Mammary epithelial cell (primary cell): ENCODE measurements at regions of chr17 and their contacts with region 1.

Region 1: DNA sequence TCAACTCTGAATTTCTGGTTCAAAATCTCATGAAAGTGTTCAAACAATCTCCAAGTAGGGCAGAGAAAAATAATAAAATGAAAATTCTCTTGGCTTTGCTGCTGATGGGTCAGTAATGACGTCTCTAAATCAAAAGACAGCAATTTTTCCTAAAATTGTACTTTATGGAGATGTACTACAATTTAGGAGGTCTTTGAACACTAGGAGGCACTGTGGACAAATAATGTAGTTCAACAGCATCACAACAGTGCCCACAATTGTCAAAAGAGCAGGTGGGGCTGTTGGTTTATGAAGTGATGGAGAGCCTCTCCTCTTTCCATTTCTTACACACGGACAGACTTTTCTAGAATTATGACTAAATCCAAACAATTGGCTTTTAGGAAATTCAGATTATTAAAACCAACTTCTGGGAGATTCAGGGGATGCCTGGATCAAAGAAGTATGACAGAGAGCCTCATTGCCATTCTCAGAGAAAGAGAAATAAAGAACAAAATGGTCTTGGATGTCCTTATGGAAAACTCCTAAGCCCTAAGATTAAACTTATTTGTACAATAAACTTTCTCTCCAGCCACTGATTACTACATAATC is 23.8 kb downstream of the EZH1 start:
- DNase-seq: peak; percentile 43
- H3K4me3 ChIP-seq: no peak overlapping the region
- H3K27ac ChIP-seq: no peak overlapping the region
- H3K4me1 ChIP-seq: no peaks in the 10 kb centered on the region
- H3K27me3 ChIP-seq: no peaks in the 10 kb centered on the region
- CTCF ChIP-seq: peak; percentile 59 to 65

Region 2: GRCh38 chr17:42667123-42667951 is 53.8 kb before region 1 on chr17:
- CTCF ChIA-PET with region 1: no interaction called
- dilution Hi-C with region 1: loop called (anchors 10 kb)
- in situ Hi-C with region 1: no loop called
- intact Hi-C with region 1: no loop called
- DNase-seq: peak; percentile 94
- H3K4me3 ChIP-seq: no peak overlapping the region
- H3K27ac ChIP-seq: peak overlapping the region; percentile 32
- H3K4me1 ChIP-seq: peaks cover 40% of the 10 kb centered on the region
- H3K27me3 ChIP-seq: no peaks in the 10 kb centered on the region
- CTCF ChIP-seq: no peak

Region 3: DNA sequence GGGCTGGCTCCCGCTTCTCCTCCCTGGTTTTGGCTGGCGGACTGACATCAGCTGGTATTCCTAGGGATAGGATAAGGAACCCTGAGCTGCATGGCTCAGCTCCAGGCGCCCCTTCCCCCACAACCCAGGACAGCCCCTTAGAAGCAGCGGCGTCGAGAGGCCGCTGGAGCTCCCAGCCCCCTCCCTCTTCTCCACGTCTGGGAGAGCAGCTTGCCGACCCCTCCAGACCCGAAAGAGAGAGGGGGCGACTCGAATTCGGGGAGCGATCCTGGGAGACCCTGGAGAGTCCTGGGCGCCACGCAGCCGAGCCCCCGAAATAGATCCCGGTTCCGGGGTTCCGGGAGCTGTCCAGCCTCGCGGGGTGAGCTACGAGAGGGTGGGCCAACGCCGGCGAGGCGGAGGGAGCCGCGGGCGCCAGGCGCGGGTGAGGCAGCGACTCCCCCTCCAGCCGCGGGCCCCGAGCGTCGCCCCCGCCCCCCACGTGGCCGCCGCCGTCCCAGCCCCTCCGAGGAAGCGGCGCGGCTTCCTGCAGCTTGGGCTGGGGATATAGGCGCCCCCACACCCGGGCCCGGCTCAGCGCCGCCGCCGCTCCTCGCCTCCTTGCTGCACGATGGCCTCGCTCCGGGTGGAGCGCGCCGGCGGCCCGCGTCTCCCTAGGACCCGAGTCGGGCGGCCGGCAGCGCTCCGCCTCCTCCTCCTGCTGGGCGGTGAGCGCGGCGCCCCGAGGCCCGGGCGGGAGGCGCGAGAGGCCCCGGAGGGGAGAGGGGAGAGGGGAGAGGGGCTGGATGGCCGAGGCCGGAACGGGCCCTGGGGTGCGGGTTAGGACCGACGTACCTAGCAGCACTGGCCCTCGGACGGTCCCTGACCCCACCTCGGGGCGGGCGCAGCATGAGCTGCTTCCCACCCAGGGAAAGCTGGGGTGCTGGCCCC is 39.8 kb after region 1 on chr17 and contains the start of gene RAMP2:
- CTCF ChIA-PET with region 1: no interaction called
- dilution Hi-C with region 1: no loop called
- in situ Hi-C with region 1: no loop called
- intact Hi-C with region 1: loop called (anchors 1 kb)
- DNase-seq: no peak
- H3K4me3 ChIP-seq: peak within 1 kb of the TSS; percentile 25 to 33 (median 31)
- H3K27ac ChIP-seq: no peak within 1 kb of the TSS
- H3K4me1 ChIP-seq: peaks cover 10% of the 10 kb centered on the region
- H3K27me3 ChIP-seq: peaks cover 17% of the 10 kb centered on the region
- CTCF ChIP-seq: no peak
- total RNA-seq, gene RAMP2: not detected

Region 4: DNA sequence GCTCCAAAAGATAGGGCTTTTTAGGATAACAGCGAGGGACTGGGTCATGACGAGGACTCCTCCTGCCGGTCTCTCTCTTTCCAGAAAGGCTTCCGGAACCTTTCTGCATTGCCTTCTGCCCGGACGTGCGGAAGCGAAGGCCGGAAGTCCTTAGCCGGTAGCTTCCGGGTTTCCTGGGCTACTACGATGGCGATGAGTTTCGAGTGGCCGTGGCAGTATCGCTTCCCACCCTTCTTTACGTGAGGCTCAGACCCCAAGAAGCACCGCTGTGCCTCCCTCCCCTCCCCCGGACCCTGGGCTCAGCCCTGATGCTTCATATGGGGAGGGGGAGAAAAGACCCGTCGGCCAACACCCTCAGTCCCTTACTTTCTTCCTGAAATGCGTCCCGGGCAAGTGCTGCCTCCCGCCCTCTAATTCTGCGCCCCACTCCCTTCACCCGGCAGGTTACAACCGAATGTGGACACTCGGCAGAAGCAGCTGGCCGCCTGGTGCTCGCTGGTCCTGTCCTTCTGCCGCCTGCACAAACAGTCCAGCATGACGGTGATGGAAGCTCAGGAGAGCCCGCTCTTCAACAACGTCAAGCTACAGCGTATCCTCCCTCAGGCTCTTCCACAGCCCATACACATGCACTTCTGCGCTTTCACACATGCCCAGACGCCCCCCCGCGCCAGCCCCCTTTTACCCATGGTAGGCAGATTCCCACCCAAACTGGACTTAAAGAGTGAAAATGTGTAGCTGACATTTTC is 52.4 kb after region 1 on chr17 and contains the start of gene VPS25:
- CTCF ChIA-PET with region 1: no interaction called
- dilution Hi-C with region 1: loop called (anchors 5 kb)
- in situ Hi-C with region 1: no loop called
- intact Hi-C with region 1: loop called (anchors 1 kb)
- DNase-seq: peak; percentile 81
- H3K4me3 ChIP-seq: peak within 1 kb of the TSS; percentile 65 to 84 (median 78)
- H3K27ac ChIP-seq: peak within 1 kb of the TSS; percentile 87
- H3K4me1 ChIP-seq: peaks cover 11% of the 10 kb centered on the region
- H3K27me3 ChIP-seq: no peaks in the 10 kb centered on the region
- CTCF ChIP-seq: peak in 1 of 2 donors; percentile 32
- total RNA-seq, gene VPS25: 58.0 to 83.6 TPM

Region 5: GRCh38 chr17:42779936-42780850 is 59.1 kb after region 1 on chr17 and contains the start of gene WNK4:
- CTCF ChIA-PET with region 1: no interaction called
- dilution Hi-C with region 1: loop called (anchors 5 kb)
- in situ Hi-C with region 1: no loop called
- intact Hi-C with region 1: no loop called
- DNase-seq: no peak
- H3K4me3 ChIP-seq: peak within 1 kb of the TSS in 1 of 3 experiments; percentile 24
- H3K27ac ChIP-seq: no peak within 1 kb of the TSS
- H3K4me1 ChIP-seq: peaks cover 24% of the 10 kb centered on the region
- H3K27me3 ChIP-seq: peaks cover 2% of the 10 kb centered on the region
- CTCF ChIP-seq: no peak
- total RNA-seq, gene WNK4: 0.75 TPM in 1 of 2 donors, not detected in the other

Region 6: DNA sequence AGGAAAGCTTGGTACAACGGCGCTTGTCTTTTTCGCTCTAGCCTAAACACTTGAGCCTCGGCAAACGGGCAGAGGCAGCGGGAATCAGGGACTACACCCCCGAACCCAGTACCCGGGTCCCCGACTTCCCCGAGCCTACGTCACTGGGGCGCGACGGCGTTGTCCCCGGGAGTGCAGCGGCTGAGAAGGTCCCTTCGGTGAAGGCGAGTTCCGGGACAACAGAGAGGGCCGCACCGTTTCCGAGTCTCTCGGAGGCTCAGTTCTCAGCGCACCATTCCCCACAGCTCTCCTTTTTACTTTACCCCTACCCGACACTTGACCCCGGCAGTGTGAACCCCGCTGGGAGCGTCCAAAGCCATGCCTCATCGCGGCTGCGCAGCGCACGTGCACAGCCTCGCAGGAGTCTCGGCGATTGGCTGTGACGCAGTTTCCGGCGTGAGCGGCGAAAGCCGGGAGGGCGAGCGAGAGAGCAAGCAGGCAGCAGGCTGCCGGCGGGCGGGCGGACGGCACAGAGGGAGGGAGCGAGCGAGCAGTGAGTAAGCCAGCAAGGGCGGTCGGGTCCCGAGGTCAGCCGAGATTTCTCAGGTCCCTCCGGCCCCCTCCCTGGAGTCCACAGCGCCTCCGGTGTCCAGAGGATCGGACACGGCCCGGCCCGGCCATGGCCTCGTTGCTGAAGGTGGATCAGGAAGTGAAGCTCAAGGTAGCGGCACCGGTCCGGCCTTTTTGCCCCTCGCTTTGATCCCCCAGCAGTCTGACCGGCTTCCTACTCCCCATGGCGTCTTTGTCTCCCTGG is 112.1 kb after region 1 on chr17 and contains the start of gene PSME3:
- CTCF ChIA-PET with region 1: interaction called, 17 read pairs
- dilution Hi-C with region 1: no loop called
- in situ Hi-C with region 1: no loop called
- intact Hi-C with region 1: no loop called
- DNase-seq: peak; percentile 90
- H3K4me3 ChIP-seq: peak within 1 kb of the TSS; percentile 66 to 81 (median 78)
- H3K27ac ChIP-seq: peak within 1 kb of the TSS; percentile 96
- H3K4me1 ChIP-seq: peaks cover 15% of the 10 kb centered on the region
- H3K27me3 ChIP-seq: no peaks in the 10 kb centered on the region
- CTCF ChIP-seq: no peak
- total RNA-seq, gene PSME3: 93.5 to 186 TPM

Region 7: GRCh38 chr17:43151880-43152456 is 430.9 kb after region 1 on chr17:
- CTCF ChIA-PET with region 1: no interaction called
- dilution Hi-C with region 1: no loop called
- in situ Hi-C with region 1: no loop called
- intact Hi-C with region 1: no loop called
- DNase-seq: no peak
- H3K4me3 ChIP-seq: no peak overlapping the region
- H3K27ac ChIP-seq: no peak overlapping the region
- H3K4me1 ChIP-seq: no peaks in the 10 kb centered on the region
- H3K27me3 ChIP-seq: no peaks in the 10 kb centered on the region
- CTCF ChIP-seq: no peak